Left ventricle myocardium superior (tissue), 1 donor: ENCODE measurements at regions of chr10 and their contacts with region 1.

Region 1: DNA sequence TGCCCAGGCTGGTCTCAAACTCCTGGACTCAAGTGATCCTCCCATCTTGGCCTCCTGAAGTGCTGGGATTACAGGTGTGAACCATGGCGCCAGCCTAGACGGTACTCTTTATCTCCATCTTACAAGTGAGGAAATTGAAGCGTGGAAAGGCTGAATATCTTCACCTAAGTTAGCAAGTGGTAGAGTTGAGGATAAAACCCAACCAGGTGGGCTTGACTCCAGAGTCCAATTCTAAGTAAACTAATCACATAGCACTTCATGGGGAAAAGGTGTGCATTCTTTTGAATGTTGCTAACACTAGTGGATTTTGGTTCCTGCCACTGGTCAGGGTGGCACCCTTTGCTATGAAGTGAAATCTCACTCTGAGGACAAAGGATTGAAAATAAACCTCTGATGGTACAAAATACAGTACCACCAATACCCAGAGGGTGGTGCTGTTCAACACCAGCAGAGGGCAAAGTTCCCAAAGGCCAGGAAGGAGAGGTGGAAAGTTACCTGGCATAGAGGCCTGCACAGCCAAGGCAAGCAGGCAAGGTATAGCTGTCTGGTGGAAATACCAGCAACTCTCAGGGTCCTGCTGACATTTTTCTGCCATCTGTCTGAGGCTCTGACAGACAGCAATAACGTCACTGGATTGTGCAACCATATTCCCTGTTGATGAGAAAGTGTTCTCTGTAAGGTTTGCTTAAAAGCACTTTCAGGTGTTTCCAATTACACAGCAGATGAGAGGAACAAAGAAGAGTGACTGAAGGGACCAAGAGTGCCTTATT is 17.6 kb downstream of the ZDHHC16 start:
- DNase-seq: no peak
- ATAC-seq: peak; percentile 70

Region 2: GRCh38 chr10:97388152-97388551 is 75.4 kb before region 1 on chr10:
- intact Hi-C with region 1: no loop called
- DNase-seq: peak; percentile 41
- ATAC-seq: peak; percentile 42

Region 3: GRCh38 chr10:97553575-97554031 is 90.1 kb after region 1 on chr10:
- intact Hi-C with region 1: loop called (anchors 5 kb)
- DNase-seq: peak; percentile 88
- ATAC-seq: peak; percentile 92

Region 4: DNA sequence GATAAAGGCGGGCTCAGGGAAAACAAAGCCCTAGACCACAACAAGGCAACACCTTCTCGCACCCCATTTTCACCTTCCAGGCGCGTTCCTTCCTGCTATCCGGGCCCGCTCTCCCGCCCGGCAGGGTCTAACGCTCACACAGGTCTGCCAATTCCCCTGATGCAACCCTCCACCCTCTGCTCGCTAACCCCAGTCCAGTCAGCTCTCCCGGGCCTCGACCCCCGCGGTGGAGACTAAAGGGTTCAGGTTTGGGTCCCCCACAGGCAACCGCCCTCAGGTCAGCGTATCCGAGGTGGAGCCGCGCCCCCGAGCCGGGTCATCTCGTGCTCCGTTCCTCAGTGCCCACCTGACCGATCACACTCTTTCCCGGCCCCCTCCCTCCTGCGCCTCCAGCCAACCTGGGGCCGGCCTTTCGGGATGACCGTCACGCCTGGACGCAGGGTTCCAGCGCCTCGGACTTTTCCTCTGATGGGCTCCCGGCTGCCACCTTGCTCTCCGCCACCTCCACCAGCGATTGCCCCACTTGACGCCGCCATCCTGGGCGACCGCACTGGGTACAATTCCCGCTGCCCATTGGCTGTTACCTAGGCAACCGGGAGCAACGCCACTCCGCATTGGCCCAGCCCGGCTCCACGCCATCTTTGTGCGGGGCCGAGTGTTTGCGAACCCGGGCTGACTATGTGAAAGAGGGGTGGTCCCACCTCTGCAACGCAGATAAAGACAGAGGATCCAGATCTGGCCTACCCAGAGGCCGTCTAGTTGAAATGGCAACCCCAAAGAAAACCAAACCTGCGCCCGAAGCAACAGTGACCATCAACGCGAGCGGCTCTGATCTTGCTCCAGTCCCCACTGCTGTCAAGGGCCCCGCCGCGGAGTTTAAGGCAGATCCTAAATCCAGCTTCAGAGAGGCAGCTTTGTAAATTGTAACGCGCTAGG is 169.7 kb after region 1 on chr10 and contains the start of gene MORN4:
- intact Hi-C with region 1: no loop called
- DNase-seq: peak; percentile 96
- ATAC-seq: peak; percentile 99
- total RNA-seq, gene MORN4: 8.7 TPM